ENCODE measurements at regions of chr16 and their contacts with region 1.

Region 1: GRCh38 chr16:8801701-8802100 is 4.1 kb downstream of the PMM2 start:
- DNase-seq: no peak
- ATAC-seq: no peak
- H3K4me3 ChIP-seq: no peak overlapping the region
- H3K4me3 Mint-ChIP-seq: no peak overlapping the region
- H3K27ac ChIP-seq: no peak overlapping the region
- H3K27ac Mint-ChIP-seq: no peak overlapping the region
- H3K4me1 ChIP-seq: peaks cover 14 to 29% of the 10 kb centered on the region in 2 experiments
- H3K4me1 Mint-ChIP-seq: peaks cover 29 to 35% (median 31%) of the 10 kb centered on the region in 3 donors
- H3K27me3 ChIP-seq: no peaks in the 10 kb centered on the region
- H3K27me3 Mint-ChIP-seq: no peaks in the 10 kb centered on the region

Region 2: GRCh38 chr16:8832717-8833105 is 31.0 kb after region 1 on chr16:
- CTCF ChIA-PET with region 1: no interaction called
- POLR2A ChIA-PET with region 1: no interaction called
- DNase-seq: peak in 2 of 35 experiments; percentile 5 to 21
- ATAC-seq: no peak
- H3K4me3 ChIP-seq: no peak overlapping the region
- H3K4me3 Mint-ChIP-seq: no peak overlapping the region
- H3K27ac ChIP-seq: no peak overlapping the region
- H3K27ac Mint-ChIP-seq: peak overlapping the region in 1 of 2 donors; percentile 8
- H3K4me1 ChIP-seq: peaks cover 0 to 13% of the 10 kb centered on the region in 2 experiments
- H3K4me1 Mint-ChIP-seq: peaks cover 18 to 23% (median 19%) of the 10 kb centered on the region in 3 donors
- H3K27me3 ChIP-seq: no peaks in the 10 kb centered on the region
- H3K27me3 Mint-ChIP-seq: no peaks in the 10 kb centered on the region

Region 3: GRCh38 chr16:9138716-9139501 is 337.2 kb after region 1 on chr16:
- CTCF ChIA-PET with region 1: interaction called in 1 of 2 experiments, 10 read pairs
- POLR2A ChIA-PET with region 1: no interaction called
- DNase-seq: peak; percentile 27 to 77 (median 55)
- ATAC-seq: peak; percentile 65 to 78 (median 70)
- H3K4me3 ChIP-seq: peak overlapping the region in 1 of 2 donors; percentile 30
- H3K4me3 Mint-ChIP-seq: peak overlapping the region in 1 of 3 donors; percentile 0
- H3K27ac ChIP-seq: no peak overlapping the region
- H3K27ac Mint-ChIP-seq: no peak overlapping the region
- H3K4me1 ChIP-seq: peaks cover 0 to 15% of the 10 kb centered on the region in 2 experiments
- H3K4me1 Mint-ChIP-seq: peaks cover 20 to 29% (median 27%) of the 10 kb centered on the region in 3 donors
- H3K27me3 ChIP-seq: peaks cover 0 to 19% of the 10 kb centered on the region in 2 experiments
- H3K27me3 Mint-ChIP-seq: peaks cover 8 to 10% of the 10 kb centered on the region in 2 donors